OCI-LY7 (cell line): ENCODE measurements at regions of chr5 and their contacts with region 1.

Region 1: DNA sequence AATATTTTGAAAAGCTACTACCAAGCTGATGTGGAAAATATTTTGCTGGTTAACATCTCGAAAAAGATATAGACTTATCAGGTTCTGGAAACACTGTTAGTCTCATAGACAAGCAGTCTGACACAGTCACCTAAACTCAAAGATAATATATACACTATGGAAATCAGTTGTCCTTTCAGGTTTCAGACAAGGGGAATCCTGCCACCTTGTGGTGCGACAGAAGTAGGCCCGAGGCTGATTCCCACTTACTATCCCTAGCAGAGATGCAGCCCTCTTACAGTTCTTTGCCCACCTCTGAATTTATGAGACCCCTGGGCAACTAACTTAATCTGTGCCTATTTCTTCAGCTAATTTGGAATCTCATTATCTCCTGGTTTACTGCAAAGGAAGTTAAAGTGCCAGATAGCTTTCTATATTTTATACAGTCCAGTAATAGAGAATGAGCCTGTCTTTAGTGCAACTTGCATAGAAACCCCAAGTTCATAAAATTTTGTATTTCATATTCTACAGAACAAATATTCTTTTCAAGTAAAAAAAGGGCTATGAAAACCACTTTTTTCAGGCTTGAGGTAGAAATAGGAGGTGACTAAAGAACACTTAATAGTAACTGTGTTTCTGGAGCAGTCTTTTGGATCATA is 16.9 kb downstream of the RAD1 start:
- DNase-seq: peak; percentile 64
- H3K4me3 ChIP-seq: no peak overlapping the region
- H3K27ac ChIP-seq: no peak overlapping the region
- H3K4me1 ChIP-seq: no peaks in the 10 kb centered on the region
- CTCF ChIP-seq: peak; percentile 95

Region 2: DNA sequence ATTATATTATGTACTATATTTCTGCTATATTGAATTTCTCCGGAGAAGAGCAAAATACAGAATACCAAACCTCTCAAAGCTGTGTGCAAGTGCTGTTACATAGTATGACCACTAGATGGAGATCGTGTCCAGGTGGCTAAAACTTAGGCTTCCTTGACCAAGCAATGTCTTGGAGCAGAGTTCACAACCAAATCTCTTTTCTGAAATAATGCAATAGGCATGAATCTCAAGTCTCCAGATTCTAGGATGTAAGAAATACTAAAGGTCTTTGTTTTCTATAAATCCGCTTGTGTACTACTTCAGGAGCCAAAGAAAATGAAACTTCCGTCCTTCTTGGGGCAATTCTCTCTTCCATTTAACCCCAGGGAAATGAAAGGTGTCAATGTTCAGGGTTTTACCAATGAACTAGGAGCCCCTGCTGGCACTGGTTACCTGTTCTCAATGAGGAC is 423.8 kb before region 1 on chr5:
- CTCF ChIA-PET with region 1: no interaction called
- POLR2A ChIA-PET with region 1: no interaction called
- intact Hi-C with region 1: loop called (anchors 5 kb)
- DNase-seq: peak; percentile 49
- H3K4me3 ChIP-seq: no peak overlapping the region
- H3K27ac ChIP-seq: no peak overlapping the region
- H3K4me1 ChIP-seq: no peaks in the 10 kb centered on the region
- CTCF ChIP-seq: peak; percentile 97

Region 3: DNA sequence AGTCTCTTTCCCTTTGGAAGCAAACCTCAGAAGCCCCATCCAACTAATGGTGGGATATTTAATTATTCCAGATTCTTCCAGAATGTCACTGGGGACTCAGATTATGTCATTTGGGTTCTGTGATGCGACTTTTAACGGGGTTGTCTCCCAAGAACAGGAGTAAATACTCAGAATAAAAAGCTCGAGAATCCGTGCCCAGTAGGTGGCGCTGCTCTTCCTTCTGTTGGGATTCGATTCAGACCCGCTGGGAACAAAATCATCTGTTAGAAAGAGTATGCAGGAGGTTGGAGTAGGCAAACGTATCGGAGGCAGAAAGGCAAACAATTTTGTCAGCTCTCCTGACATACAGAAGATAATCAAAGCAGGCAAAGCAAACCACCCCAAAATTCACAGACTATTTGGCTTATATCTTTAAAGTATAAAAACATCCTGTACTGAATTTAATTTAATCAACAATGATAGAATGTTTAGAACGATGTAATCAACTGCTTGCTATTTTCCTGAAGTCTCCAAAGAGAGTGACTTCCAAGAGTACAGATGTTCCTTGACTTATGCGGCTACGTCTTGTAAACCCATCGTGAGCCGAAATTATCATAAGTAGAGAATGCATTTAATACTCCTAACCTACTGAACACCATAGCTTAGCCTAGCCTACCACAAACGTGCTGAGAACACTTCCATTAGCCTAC is 412.1 kb before region 1 on chr5:
- CTCF ChIA-PET with region 1: no interaction called
- POLR2A ChIA-PET with region 1: no interaction called
- intact Hi-C with region 1: loop called (anchors 2 kb)
- DNase-seq: peak; percentile 74
- H3K4me3 ChIP-seq: no peak overlapping the region
- H3K27ac ChIP-seq: no peak overlapping the region
- H3K4me1 ChIP-seq: no peaks in the 10 kb centered on the region
- CTCF ChIP-seq: peak; percentile 97

Region 4: GRCh38 chr5:34522599-34523386 is 375.6 kb before region 1 on chr5:
- CTCF ChIA-PET with region 1: no interaction called
- POLR2A ChIA-PET with region 1: interaction called, 3 read pairs
- intact Hi-C with region 1: loop called (anchors 1 kb)
- DNase-seq: peak; percentile 78
- H3K4me3 ChIP-seq: no peak overlapping the region
- H3K27ac ChIP-seq: no peak overlapping the region
- H3K4me1 ChIP-seq: no peaks in the 10 kb centered on the region
- CTCF ChIP-seq: peak; percentile 85

Region 5: DNA sequence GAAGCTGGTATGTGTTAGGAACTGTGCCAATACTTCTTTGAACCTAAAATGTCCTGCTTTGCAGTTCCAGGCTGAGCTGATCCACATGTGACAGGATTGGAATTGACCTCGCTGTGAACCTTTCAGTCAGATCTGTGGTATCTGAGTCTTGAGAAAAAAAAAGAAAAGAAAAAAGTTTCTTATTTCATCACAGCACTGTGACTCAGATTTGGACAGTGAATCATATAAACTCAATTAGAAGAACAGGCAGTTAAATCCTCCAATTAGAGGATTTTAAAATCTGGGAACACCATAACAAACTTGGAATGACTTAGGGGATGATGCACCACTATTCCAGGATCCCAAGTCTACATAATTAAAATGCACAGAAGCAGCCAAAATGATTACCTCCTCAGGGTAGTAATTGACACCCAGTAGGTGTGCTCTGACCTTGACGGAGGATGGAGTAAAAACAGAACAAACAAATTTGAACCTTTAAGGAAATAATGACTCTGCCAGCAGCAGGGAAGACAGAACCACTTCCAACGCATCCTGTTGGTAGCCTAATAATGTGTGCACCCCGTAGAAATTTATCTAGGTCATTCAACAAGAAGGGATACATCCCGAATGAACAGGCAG is 300.1 kb before region 1 on chr5:
- CTCF ChIA-PET with region 1: no interaction called
- POLR2A ChIA-PET with region 1: no interaction called
- intact Hi-C with region 1: no loop called
- DNase-seq: no peak
- H3K4me3 ChIP-seq: no peak overlapping the region
- H3K27ac ChIP-seq: no peak overlapping the region
- H3K4me1 ChIP-seq: no peaks in the 10 kb centered on the region
- CTCF ChIP-seq: no peak